PC-9 (cell line): ENCODE measurements at regions of chr1 and their contacts with region 1.

Region 1: GRCh38 chr1:70277875-70278274 is 56.7 kb downstream of the SRSF11 start:
- DNase-seq: no peak
- H3K4me3 ChIP-seq: no peak overlapping the region
- H3K27ac ChIP-seq: no peak overlapping the region
- H3K4me1 ChIP-seq: no peaks in the 10 kb centered on the region
- H3K27me3 ChIP-seq: no peaks in the 10 kb centered on the region
- CTCF ChIP-seq: no peak

Region 2: DNA sequence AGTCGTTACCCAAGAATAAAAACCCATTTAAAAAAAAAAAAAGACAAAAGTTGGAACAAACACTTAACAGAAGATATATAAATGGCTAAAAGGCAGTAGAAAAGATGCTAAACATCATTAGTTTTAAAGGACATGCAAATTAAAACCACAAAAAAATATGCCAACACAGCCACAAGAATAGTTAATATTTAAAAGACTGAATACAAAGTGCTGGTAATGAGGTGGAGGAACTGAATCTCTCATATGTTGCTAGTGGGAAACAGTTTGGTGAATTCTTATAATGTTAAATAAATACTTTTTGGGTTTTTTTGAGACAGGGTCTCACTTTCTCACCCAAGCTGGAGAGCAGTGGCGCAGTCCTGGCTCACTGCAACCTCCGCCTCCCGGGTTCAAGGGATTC is 82.5 kb before region 1 on chr1:
- CTCF ChIA-PET with region 1: no interaction called
- POLR2A ChIA-PET with region 1: interaction called, 15 read pairs
- intact Hi-C with region 1: no loop called
- DNase-seq: no peak
- H3K4me3 ChIP-seq: no peak overlapping the region
- H3K27ac ChIP-seq: no peak overlapping the region
- H3K4me1 ChIP-seq: no peaks in the 10 kb centered on the region
- H3K27me3 ChIP-seq: no peaks in the 10 kb centered on the region
- CTCF ChIP-seq: no peak

Region 3: DNA sequence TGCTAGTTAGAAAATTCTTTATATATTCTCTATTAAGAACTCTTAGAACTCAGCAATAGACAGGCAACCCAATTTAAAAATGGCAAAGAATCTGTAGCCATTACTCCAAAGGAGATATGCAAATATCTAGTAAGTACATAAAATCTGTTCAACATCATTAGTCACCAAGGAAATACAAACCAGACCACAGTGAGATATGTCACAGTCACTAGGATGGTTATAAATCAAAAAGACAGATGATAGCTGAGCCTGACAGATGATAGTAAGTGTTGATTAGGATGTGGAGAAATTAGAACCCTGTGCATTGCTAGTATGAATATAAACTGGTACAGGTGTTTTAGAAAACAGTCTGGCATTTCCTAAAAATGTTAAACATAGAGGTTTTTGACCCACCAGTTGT is 30.1 kb before region 1 on chr1:
- CTCF ChIA-PET with region 1: no interaction called
- POLR2A ChIA-PET with region 1: interaction called, 11 read pairs
- intact Hi-C with region 1: no loop called
- DNase-seq: no peak
- H3K4me3 ChIP-seq: no peak overlapping the region
- H3K27ac ChIP-seq: no peak overlapping the region
- H3K4me1 ChIP-seq: no peaks in the 10 kb centered on the region
- H3K27me3 ChIP-seq: no peaks in the 10 kb centered on the region
- CTCF ChIP-seq: no peak

Region 4: GRCh38 chr1:70290218-70290617 is 12.3 kb after region 1 on chr1:
- CTCF ChIA-PET with region 1: no interaction called
- POLR2A ChIA-PET with region 1: no interaction called
- intact Hi-C with region 1: no loop called
- DNase-seq: no peak
- H3K4me3 ChIP-seq: no peak overlapping the region
- H3K27ac ChIP-seq: no peak overlapping the region
- H3K4me1 ChIP-seq: no peaks in the 10 kb centered on the region
- H3K27me3 ChIP-seq: no peaks in the 10 kb centered on the region
- CTCF ChIP-seq: no peak

Region 5: GRCh38 chr1:70427976-70428375 is 150.1 kb after region 1 on chr1:
- CTCF ChIA-PET with region 1: no interaction called
- POLR2A ChIA-PET with region 1: no interaction called
- intact Hi-C with region 1: loop called (anchors 10 kb)
- DNase-seq: no peak
- H3K4me3 ChIP-seq: no peak overlapping the region
- H3K27ac ChIP-seq: no peak overlapping the region
- H3K4me1 ChIP-seq: no peaks in the 10 kb centered on the region
- H3K27me3 ChIP-seq: no peaks in the 10 kb centered on the region
- CTCF ChIP-seq: no peak